ENCODE measurements at regions of chr19 and their contacts with region 1.

Region 1: GRCh38 chr19:47663841-47664771 is 49.1 kb upstream of the EHD2 start:
- DNase-seq: peak; percentile 78
- ATAC-seq: peak; percentile 82

Region 2: DNA sequence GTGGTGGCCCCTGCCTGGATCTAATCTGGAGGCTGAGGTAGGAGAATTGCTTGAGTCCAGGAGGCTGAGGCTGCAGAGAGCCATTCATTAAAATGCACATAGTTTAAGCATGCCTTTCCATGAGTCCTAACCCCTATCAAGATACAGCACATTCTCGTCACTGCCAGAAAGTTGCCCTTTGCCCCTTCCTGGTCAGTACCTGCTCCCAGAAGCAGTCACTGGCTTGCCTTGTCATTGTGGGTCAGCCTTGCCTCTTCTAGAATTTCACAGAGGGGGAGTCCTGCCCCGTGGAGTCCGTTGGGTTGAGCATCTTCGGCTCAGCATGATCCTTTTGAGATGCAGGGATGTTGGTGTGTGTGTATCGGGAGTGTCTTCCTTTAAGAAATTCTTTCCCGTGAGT is 44.3 kb before region 1 on chr19:
- intact Hi-C with region 1: loop called (anchors 5 kb)
- DNase-seq: no peak
- ATAC-seq: no peak

Measured in Right ventricle myocardium superior (tissue), 1 donor.